Activated T-helper 1 cell treated with anti-CD3 and anti-CD28 coated beads, Interleukin-12 subunit alpha, Interleukin-12 subunit beta, Interleukin-2, Interleukin-4 antibody, amounts not matched to agents 30 ng/mL and 10 ng/mL and 1 ng/mL, durations not matched to agents 14 hours and 24 hours and 36 hours (primary cell): ENCODE measurements at regions of chr3 and their contacts with region 1.

Region 1: GRCh38 chr3:155854141-155854940 is at the start of gene SLC33A1:
- DNase-seq: peak; percentile 98
- H3K4me3 Mint-ChIP-seq: peak within 1 kb of the TSS; percentile 91
- H3K27ac Mint-ChIP-seq: peak within 1 kb of the TSS; percentile 96
- H3K4me1 Mint-ChIP-seq: peaks cover 36% of the 10 kb centered on the region
- H3K27me3 Mint-ChIP-seq: no peaks in the 10 kb centered on the region
- total RNA-seq, gene SLC33A1: 27.4 and 30.7 TPM in 2 replicates

Region 2: GRCh38 chr3:154323891-154324738 is 1530.2 kb before region 1 on chr3 and contains the start of gene DHX36:
- intact Hi-C with region 1: loop called (anchors 5 kb)
- DNase-seq: peak; percentile 84
- H3K4me3 Mint-ChIP-seq: peak within 1 kb of the TSS; percentile 95
- H3K27ac Mint-ChIP-seq: peak within 1 kb of the TSS; percentile 96
- H3K4me1 Mint-ChIP-seq: peaks cover 20% of the 10 kb centered on the region
- H3K27me3 Mint-ChIP-seq: no peaks in the 10 kb centered on the region
- total RNA-seq, gene DHX36: 95.2 and 101 TPM in 2 replicates

Region 3: GRCh38 chr3:155744626-155745324 is 109.6 kb before region 1 on chr3 and contains the start of gene PLCH1:
- intact Hi-C with region 1: loop called (anchors 5 kb)
- DNase-seq: no peak
- H3K4me3 Mint-ChIP-seq: peak within 1 kb of the TSS; percentile 84
- H3K27ac Mint-ChIP-seq: peak within 1 kb of the TSS; percentile 25
- H3K4me1 Mint-ChIP-seq: peaks cover 11% of the 10 kb centered on the region
- H3K27me3 Mint-ChIP-seq: peaks cover 73% of the 10 kb centered on the region
- total RNA-seq, gene PLCH1: 0.10 and 0.16 TPM in 2 replicates

Region 4: GRCh38 chr3:155805802-155806618 is 48.3 kb before region 1 on chr3 and contains the start of gene C3orf33:
- intact Hi-C with region 1: loop called (anchors 1 kb)
- DNase-seq: peak; percentile 70
- H3K4me3 Mint-ChIP-seq: peak within 1 kb of the TSS; percentile 83
- H3K27ac Mint-ChIP-seq: peak within 1 kb of the TSS; percentile 74
- H3K4me1 Mint-ChIP-seq: peaks cover 10% of the 10 kb centered on the region
- H3K27me3 Mint-ChIP-seq: peaks cover 6% of the 10 kb centered on the region
- total RNA-seq, gene C3orf33: 1.9 and 2.0 TPM in 2 replicates

Region 5: DNA sequence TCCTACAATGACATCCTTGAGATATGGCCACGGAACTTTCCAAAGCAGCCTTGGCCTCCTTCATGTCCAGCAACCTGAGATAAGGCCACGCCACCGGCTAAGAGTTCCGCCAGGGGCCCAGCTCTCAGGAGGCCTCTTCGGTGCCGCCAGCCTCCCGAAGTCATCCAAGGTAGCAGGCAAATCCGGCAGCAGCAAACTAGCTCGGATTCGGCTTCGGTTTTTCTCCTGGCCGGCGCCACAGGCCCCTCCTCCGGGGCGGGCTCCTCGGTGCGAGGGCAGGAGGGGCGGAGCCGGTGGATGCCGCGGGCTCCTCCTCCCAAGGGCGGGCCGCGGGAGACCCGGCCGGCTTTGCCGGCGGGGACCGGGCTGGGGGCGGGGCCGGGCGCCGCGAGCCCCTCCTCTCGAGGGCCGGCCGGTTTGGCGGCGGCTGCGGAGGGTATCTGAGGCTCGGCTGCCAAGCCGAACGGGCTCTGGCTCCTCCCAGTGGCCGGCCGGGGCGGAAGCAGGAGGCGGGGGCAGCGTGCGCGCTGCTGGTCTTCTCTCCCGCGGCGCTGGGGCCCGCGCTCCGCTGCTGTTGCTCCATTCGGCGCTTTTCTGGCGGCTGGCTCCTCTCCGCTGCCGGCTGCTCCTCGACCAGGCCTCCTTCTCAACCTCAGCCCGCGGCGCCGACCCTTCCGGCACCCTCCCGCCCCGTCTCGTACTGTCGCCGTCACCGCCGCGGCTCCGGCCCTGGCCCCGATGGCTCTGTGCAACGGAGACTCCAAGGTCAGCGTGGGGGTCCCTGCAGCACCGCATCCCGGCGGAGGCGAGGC is 16.0 kb after region 1 on chr3 and contains the start of gene GMPS:
- intact Hi-C with region 1: loop called (anchors 1 kb)
- DNase-seq: peak; percentile 98
- H3K4me3 Mint-ChIP-seq: peak within 1 kb of the TSS; percentile 98
- H3K27ac Mint-ChIP-seq: peak within 1 kb of the TSS; percentile 96
- H3K4me1 Mint-ChIP-seq: peaks cover 23% of the 10 kb centered on the region
- H3K27me3 Mint-ChIP-seq: no peaks in the 10 kb centered on the region
- total RNA-seq, gene GMPS: 131 and 144 TPM in 2 replicates

Region 6: GRCh38 chr3:156816800-156817645 is 962.7 kb after region 1 on chr3:
- intact Hi-C with region 1: loop called (anchors 5 kb)
- DNase-seq: peak; percentile 90
- H3K4me3 Mint-ChIP-seq: peak overlapping the region; percentile 92
- H3K27ac Mint-ChIP-seq: peak overlapping the region; percentile 98
- H3K4me1 Mint-ChIP-seq: peaks cover 75% of the 10 kb centered on the region
- H3K27me3 Mint-ChIP-seq: no peaks in the 10 kb centered on the region

Region 7: DNA sequence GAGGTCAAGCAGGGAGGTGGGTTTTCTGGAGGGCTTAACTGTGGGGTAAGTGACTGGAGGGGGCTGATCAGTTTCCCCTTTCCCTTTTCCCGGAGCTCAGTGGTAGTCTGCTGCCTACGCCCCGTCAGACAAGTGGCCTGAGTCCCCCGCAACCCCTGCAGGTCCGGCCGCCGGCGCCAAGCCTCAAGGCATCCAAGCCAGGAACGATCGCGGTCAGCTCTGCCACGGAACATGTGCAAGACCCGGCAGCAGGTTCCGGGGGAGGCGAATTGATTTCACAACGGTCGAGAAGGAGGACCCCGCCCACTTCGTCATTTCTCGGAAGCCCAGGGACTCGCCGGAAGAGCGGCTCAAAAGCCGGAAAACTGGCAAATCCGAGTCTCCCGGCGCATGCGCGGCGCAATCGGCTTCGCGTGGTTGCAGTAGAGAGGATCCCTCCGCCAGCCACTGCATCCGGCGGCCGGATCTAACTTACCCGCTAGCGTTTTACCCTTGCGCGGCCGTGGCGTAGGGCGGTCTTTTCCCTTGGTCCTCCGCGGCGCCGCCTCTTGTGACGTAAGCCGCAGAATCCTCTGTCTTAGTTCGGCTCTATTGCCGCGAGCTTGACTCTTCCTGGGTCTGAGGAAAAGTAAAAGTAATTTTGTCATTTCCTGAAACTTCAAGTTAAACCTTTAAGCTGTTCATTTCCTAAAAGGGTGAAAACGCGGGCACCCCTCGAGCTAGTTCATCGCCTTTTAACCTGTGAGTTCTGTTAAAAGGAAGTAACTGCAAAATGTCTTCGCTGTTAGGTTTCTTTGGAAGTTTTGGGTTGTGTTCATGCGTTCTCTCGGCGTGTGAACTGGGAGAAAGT is 1320.5 kb after region 1 on chr3:
- intact Hi-C with region 1: loop called (anchors 1 kb)
- DNase-seq: peak; percentile 98
- H3K4me3 Mint-ChIP-seq: peak overlapping the region; percentile 94
- H3K27ac Mint-ChIP-seq: peak overlapping the region; percentile 96
- H3K4me1 Mint-ChIP-seq: peaks cover 47% of the 10 kb centered on the region
- H3K27me3 Mint-ChIP-seq: peaks cover 2% of the 10 kb centered on the region